GM18951 (cell line): ENCODE measurements at regions of chr20 and their contacts with region 1.

Region 1: GRCh38 chr20:44866703-44867335 is 18.7 kb upstream of the YWHAB start:
- POLR2A ChIP-seq: no peak

Region 2: DNA sequence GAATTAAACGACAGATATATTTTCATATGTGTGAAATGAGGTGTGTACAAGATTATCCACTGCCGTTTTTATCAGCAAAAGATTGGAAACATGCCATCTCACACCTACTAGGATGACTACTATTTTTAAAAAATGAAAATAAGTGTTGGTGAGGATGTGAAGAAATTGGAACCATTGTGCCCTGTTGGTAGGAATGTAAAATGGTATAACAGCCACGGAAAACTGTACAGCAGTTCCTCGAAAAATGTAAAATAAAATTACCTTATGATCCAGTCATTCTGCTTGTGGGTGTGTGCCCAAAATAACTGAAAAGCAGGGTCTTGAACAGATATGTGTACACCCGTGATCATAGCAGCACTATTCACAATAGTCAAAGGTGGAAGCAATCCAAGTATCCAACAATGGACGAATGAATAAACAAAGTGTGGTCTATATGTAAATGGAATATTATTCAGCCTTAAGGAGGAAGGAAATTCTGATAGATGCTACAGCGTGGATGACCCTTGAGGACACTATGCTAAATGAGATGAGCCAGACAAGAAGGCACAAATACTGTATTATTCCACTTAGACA is 178.7 kb before region 1 on chr20:
- in situ Hi-C with region 1: loop called (anchors 5 kb)
- POLR2A ChIP-seq: no peak